Head of caudate nucleus (tissue), 42 donors: ENCODE measurements at regions of chr3 and their contacts with region 1.

Region 1: DNA sequence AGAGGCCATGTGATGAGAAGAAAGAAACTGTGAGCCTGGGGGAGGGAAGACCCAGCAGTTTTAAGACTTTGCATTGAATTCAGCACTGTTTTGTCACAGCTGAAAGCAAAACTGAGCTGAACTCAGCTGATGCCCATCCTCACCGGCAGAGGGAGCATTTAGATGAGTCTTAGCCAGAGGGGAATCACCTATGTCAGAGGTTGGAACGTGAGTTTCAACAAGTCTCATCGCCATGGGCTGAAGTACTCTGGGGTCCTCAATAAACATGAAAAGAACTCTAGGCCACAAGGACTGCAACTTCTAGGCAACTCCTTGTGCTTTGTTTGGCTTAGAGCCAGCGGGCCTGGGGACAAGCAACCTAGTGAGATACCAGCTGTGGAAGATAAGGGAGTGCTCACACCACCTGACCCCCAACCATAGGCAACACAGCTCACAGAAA is 324.5 kb downstream of the TBL1XR1 start:
- DNase-seq: peak in 34 of 42 donors; percentile 5 to 78 (median 39)

Region 2: DNA sequence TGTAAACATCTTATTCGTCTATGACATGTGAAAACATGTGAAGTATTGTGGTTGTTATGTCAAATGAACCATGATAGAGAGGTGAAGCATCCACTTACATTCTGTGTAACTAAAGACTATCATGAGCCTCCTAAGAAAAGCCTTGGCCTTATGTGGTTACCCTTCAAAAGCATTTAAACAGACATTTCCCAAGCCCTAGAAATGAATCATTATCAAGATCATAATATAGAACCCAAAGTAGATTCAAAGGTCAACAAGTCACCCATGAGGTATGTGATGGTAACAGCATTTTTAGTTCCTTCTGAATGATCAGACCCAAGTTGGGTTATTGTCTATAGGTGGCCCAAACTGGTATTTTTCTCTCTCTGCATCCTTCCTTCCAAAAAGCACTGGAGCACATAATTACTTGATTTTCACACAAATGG is 83.5 kb before region 1 on chr3:
- intact Hi-C with region 1: no loop called
- DNase-seq: no peak

Region 3: DNA sequence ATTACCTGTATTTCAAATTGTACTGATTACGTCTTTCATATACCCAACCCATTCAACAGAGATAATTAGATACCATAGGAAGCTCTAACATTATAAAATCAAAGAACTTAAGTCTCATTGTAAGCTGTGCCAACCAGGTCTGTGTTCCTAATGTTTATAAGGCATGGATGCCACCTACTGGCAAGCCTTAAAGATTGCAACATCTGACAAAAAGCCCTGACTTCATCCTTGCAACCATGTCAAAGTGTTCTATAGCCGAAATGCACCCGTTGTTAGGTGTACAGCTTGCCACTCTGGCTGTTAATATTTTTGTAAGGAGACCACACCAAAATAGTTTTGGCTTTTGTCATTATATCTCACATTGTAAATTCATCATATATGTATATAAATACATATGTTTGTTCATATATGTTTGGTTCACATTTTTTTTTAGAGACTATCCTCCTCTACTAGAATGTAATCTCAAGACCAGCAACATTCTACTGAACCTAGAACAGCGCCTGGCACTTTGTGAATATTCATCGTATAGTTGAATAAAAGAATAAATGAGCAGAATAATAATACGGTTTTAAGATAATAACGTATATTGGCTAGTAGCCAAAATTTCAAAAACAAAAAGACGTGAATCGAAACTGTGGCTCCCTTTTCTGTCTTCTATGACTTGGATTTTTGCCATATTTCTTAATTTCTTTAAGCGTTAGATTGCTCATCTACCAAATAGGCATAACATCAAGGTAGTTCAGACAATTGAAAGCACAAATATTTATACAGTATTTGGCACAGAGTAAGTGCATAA is 66.4 kb after region 1 on chr3:
- intact Hi-C with region 1: loop called (anchors 10 kb)
- DNase-seq: peak in 26 of 42 donors; percentile 10 to 76 (median 40)